Heart left ventricle (tissue), 16 donors: ENCODE measurements at regions of chr3 and their contacts with region 1.

Region 1: DNA sequence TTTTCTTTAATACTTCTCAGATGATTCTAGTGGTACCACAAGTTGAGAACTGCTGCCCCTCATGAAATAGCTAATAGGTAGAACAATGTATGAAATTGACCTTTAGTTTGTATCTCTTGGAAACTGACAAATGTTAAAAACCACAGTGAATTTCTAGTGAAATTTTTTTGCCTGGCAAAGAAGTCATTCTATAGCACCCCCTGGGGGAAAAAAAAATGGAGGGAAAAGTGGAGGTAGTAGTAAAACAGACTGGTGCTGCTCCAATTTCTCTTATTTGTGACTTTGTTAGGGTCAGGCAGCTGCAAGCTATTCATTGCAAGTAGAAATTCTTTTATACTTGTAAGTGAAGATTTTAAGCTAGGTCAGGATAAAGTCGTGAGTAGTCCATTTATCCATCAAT is 605.0 kb downstream of the NLGN1 start:
- DNase-seq: no peak
- ATAC-seq: no peak
- H3K4me3 ChIP-seq: no peak overlapping the region
- H3K27ac ChIP-seq: no peak overlapping the region
- H3K4me1 ChIP-seq: no peaks in the 10 kb centered on the region
- H3K27me3 ChIP-seq: no peaks in the 10 kb centered on the region
- CTCF ChIP-seq: peak in 3 of 12 donors; percentile 5 to 31 (median 5)
- POLR2A ChIP-seq: no peak

Region 2: GRCh38 chr3:173584093-173584837 is 418.3 kb before region 1 on chr3:
- intact Hi-C with region 1: loop called in 1 of 10 experiments (anchors 10 kb)
- DNase-seq: no peak
- ATAC-seq: peak in 1 of 4 donors; percentile 49
- H3K4me3 ChIP-seq: peak overlapping the region in 11 of 12 donors; percentile 35 to 65 (median 57)
- H3K27ac ChIP-seq: no peak overlapping the region
- H3K4me1 ChIP-seq: peaks cover 0 to 13% (median 0%) of the 10 kb centered on the region in 12 donors
- H3K27me3 ChIP-seq: peaks cover 0 to 9% (median 0%) of the 10 kb centered on the region in 9 donors
- CTCF ChIP-seq: peak; percentile 47 to 69 (median 62)
- POLR2A ChIP-seq: no peak

Region 3: DNA sequence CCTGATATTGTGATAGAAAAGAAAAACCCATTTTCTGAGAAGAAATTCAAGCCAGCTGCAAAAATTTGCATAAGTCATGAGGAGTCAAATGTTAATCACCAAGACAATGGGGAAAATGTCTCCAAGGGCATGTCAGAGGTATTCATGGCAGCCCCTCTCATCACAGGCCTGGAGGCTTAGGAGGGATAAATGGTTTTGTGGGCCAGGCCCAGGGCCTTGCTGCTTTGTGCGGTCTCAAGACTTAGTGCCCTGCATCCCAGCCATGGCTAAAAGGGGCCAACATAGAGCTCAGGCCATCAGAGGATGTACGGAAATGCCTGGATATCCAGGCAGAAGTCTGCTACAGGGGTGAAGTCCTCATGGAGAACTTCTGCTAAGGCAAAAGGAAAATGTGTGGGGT is 26.1 kb after region 1 on chr3:
- intact Hi-C with region 1: no loop called
- DNase-seq: no peak
- ATAC-seq: no peak
- H3K4me3 ChIP-seq: no peak overlapping the region
- H3K27ac ChIP-seq: no peak overlapping the region
- H3K4me1 ChIP-seq: no peaks in the 10 kb centered on the region
- H3K27me3 ChIP-seq: no peaks in the 10 kb centered on the region
- CTCF ChIP-seq: no peak
- POLR2A ChIP-seq: no peak

Region 4: DNA sequence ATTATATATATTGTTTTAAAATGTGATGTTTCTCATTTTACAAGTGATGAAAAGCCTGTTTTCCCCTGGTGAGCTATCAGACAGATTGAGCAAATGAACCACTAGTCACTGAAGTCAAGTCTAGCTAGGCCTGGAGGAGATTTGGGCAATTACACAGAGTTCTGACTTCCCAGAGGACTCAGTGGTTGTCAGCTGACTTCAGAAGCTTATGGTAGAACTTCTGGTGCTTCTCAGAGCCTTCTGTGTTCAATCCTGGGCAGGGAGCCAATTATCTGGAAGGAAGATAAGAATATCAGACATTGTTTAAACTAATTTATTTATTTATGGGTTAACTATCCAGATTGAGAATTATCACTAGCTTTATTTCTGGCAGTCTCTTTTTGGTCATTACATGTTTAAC is 818.9 kb after region 1 on chr3:
- intact Hi-C with region 1: loop called in 1 of 10 experiments (anchors 10 kb)
- DNase-seq: peak in 1 of 5 donors; percentile 26
- ATAC-seq: peak in 3 of 4 donors; percentile 67 to 93 (median 70)
- H3K4me3 ChIP-seq: no peak overlapping the region
- H3K27ac ChIP-seq: peak overlapping the region in 2 of 12 donors; percentile 7 to 11
- H3K4me1 ChIP-seq: peaks cover 0 to 12% (median 2%) of the 10 kb centered on the region in 12 donors
- H3K27me3 ChIP-seq: no peaks in the 10 kb centered on the region
- CTCF ChIP-seq: no peak
- POLR2A ChIP-seq: no peak